Heart right ventricle (tissue), 16 donors: ENCODE measurements at regions of chr22 and their contacts with region 1.

Region 1: GRCh38 chr22:24175160-24175808 is 6.0 kb upstream of the SUSD2 start:
- DNase-seq: peak; percentile 85 to 88
- ATAC-seq: peak; percentile 56 to 86 (median 76)
- H3K4me3 ChIP-seq: no peak overlapping the region
- H3K27ac ChIP-seq: peak overlapping the region in 9 of 10 donors; percentile 41 to 84 (median 74)
- H3K4me1 ChIP-seq: peaks cover 8 to 57% (median 24%) of the 10 kb centered on the region in 9 donors
- H3K27me3 ChIP-seq: no peaks in the 10 kb centered on the region
- CTCF ChIP-seq: peak; percentile 74 to 93 (median 90)

Region 2: DNA sequence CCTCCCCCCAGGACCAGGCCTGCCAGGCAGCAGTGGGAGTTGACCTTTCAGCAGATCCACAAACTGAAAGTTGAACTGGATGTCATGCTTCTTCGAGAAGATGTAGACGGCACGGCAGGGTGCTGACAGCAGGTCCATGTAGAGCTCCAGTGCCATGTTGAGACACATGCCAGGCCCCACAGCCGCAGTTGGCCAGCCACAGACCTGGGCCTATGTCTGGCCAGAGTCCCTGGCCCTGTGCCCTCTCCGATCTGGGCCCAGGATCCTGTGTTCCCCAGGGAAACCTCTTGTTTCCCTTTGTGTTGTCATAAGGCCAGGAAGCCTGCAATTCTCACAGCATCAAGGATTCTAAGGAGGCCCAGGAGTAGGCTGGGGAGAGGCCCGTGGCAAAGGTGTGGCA is 170.1 kb before region 1 on chr22 and contains the start of gene GSTT4:
- intact Hi-C with region 1: loop called in 4 of 10 experiments (anchors 5 to 10 kb)
- DNase-seq: peak; percentile 80 to 86
- ATAC-seq: peak; percentile 88 to 98 (median 94)
- H3K4me3 ChIP-seq: peak within 1 kb of the TSS in 1 of 10 donors; percentile 5
- H3K27ac ChIP-seq: peak within 1 kb of the TSS in 8 of 10 donors; percentile 39 to 74 (median 61)
- H3K4me1 ChIP-seq: peaks cover 0 to 18% (median 11%) of the 10 kb centered on the region in 9 donors
- H3K27me3 ChIP-seq: no peaks in the 10 kb centered on the region
- CTCF ChIP-seq: no peak
- total RNA-seq, gene GSTT4: not detected

Region 3: DNA sequence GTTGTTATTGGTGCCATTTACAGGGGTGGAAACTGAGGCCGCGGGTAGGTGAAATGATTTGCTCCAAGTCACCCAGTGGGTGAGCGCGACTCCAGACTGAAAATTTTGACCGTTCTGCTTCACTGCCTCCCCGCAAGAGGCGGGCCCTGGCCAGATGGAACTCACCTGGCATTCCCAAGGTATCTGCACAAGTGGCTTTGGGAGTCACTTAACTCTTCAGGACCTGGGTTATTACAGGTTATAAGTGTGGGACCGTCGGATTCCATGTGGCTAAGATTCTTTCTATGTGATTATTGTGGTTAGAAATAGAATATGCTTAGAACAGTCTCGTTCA is 163.6 kb before region 1 on chr22:
- intact Hi-C with region 1: loop called in 4 of 10 experiments (anchors 5 to 10 kb)
- DNase-seq: no peak
- ATAC-seq: peak in 1 of 8 donors; percentile 15
- H3K4me3 ChIP-seq: peak overlapping the region; percentile 70 to 99 (median 90)
- H3K27ac ChIP-seq: peak overlapping the region; percentile 46 to 93 (median 82)
- H3K4me1 ChIP-seq: peaks cover 0 to 22% (median 15%) of the 10 kb centered on the region in 9 donors
- H3K27me3 ChIP-seq: no peaks in the 10 kb centered on the region
- CTCF ChIP-seq: no peak